ENCODE measurements at regions of chr13 and their contacts with region 1.

Region 1: DNA sequence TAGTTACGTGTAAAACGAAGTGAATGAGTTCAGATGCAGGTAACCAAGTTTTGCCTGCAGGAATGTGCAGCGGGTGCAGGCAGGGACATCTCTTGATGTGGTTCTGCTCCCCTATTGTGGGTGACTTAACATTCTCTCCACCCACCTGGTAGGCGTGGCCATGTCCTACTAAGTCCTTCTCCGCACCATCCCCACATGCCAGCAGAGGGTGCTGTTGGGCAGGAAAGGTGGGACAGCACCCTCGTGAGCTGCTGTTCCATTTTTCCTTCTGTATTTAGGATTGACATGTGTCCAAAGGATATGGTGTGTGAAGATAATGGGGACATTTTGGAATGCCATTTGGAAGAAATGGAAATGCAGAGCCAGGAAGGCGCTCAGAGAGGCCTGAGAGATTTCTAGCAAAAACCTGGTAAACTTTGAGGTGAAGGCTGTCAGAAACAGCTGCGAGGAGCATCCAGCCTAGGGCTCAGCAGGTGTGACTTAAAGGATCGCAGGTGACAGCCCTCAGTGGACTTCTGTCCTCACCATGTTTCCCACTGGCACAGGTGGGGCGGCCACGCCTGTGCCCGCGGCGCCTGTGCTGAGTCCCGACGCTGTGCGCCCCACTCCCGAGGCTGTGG is 26.2 kb upstream of the MCF2L start:
- DNase-seq: peak; percentile 96
- H3K4me3 ChIP-seq: peak overlapping the region in 3 of 4 donors; percentile 47 to 68 (median 54)
- H3K27ac ChIP-seq: peak overlapping the region; percentile 21 to 70 (median 43)
- H3K4me1 ChIP-seq: peaks cover 0 to 18% (median 12%) of the 10 kb centered on the region in 4 donors
- H3K27me3 ChIP-seq: no peaks in the 10 kb centered on the region
- CTCF ChIP-seq: peak; percentile 74 to 91 (median 86)
- EP300 ChIP-seq: no peak
- POLR2A ChIP-seq: no peak

Region 2: GRCh38 chr13:113029487-113030258 is 86.9 kb after region 1 on chr13:
- intact Hi-C with region 1: loop called (anchors 5 kb)
- DNase-seq: no peak
- H3K4me3 ChIP-seq: no peak overlapping the region
- H3K27ac ChIP-seq: no peak overlapping the region
- H3K4me1 ChIP-seq: peaks cover 0 to under 1% (median 0%) of the 10 kb centered on the region in 4 donors
- H3K27me3 ChIP-seq: peaks cover 0 to 33% (median 4%) of the 10 kb centered on the region in 3 donors
- CTCF ChIP-seq: peak in 3 of 4 experiments; percentile 52 to 58 (median 58)
- EP300 ChIP-seq: no peak
- POLR2A ChIP-seq: no peak

Region 3: DNA sequence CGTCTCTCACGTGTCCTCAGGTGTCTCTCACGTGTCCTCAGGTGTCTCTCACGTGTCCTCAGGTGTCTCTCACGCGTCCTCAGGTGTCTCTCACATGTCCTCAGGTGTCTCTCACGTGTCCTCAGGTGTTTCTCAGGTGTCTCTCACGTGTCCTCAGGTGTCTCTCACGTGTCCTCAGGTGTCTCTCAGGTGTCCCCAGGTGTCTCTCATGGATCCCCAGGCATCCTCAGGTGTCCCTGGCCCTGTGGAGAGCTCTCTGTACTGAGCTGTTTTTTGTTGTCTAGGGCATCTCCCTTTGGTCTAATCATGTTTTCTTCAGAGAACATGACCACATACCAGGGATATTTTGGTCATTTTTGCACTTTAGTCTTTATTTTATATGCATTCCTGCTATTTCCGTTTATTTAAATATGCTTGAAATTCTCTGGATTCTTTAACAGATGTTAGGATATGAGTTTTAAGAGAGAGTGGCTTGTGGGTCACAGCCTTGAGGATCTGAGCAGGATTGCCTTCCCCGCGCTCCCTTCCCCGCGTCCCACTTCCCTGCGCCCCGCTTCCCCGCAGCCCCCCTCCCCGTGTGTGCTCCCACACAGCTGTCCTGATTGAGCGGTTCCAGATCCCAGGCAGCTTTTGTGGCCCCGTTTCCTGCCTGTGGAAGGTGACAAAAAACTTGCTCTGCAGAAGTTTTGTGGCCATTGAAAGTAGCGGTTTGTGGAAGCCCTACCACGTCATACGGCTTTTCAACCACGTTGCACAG is 683.3 kb after region 1 on chr13:
- intact Hi-C with region 1: no loop called
- DNase-seq: peak; percentile 32
- H3K4me3 ChIP-seq: no peak overlapping the region
- H3K27ac ChIP-seq: no peak overlapping the region
- H3K4me1 ChIP-seq: peaks cover 0 to 5% (median 0%) of the 10 kb centered on the region in 4 donors
- H3K27me3 ChIP-seq: no peaks in the 10 kb centered on the region
- CTCF ChIP-seq: no peak
- EP300 ChIP-seq: no peak
- POLR2A ChIP-seq: no peak

Measured in sigmoid colon (tissue), 7 donors.